Calu3 (cell line): ENCODE measurements at regions of chr14 and their contacts with region 1.

Region 1: DNA sequence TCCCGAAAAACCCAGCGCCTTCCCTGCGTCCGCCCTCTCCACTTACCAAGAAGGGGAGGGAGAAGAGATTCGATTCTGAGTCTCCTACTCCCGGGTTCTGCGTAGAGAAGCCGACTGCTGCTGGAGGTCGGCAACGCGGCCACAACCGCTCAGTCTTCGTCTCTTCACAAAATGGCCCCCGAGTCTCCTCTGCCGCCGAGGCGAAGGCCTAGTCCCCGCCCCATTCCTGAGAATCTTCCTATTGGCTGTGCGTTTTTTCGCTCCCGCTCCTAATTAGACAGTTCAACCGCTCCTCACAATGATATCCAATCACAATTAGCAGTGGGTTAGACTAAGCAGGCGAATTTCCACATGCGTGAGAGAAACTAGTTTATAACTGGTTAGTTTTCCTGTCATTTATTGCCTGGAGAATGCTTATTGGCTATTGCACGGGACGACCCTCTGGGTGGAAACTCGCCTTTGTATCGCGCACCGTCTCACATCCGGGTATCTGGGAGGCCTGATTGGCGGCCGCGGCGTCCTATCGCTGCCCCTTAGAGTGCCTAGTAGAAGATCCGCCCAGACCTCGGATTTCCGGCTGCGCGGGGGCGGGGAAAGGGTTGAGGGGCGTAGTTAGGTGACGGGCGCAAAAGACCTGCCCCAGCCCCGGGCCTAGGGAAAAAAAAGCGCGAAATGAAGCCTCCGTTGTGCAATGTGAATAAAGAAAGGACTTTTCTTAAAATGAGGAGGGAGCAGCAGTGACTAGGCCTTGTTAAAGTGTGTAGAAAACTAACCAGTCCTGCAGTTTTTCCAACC is at the start of gene HNRNPC:
- DNase-seq: peak; percentile 100
- H3K4me3 Mint-ChIP-seq: peak within 1 kb of the TSS; percentile 93
- H3K27ac Mint-ChIP-seq: peak within 1 kb of the TSS; percentile 99
- H3K4me1 Mint-ChIP-seq: no peaks in the 10 kb centered on the region
- H3K27me3 Mint-ChIP-seq: no peaks in the 10 kb centered on the region
- CTCF ChIP-seq: no peak
- total RNA-seq, gene HNRNPC: 472 and 476 TPM in 2 replicates

Region 2: GRCh38 chr14:21233457-21234076 is 35.9 kb before region 1 on chr14:
- CTCF ChIA-PET with region 1: no interaction called
- intact Hi-C with region 1: loop called (anchors 5 kb)
- DNase-seq: no peak
- H3K4me3 Mint-ChIP-seq: no peak overlapping the region
- H3K27ac Mint-ChIP-seq: no peak overlapping the region
- H3K4me1 Mint-ChIP-seq: peaks cover 59% of the 10 kb centered on the region
- H3K27me3 Mint-ChIP-seq: no peaks in the 10 kb centered on the region
- CTCF ChIP-seq: no peak

Region 3: GRCh38 chr14:21299562-21300130 is 30.2 kb after region 1 on chr14:
- CTCF ChIA-PET with region 1: interaction called, 12 read pairs
- intact Hi-C with region 1: no loop called
- DNase-seq: no peak
- H3K4me3 Mint-ChIP-seq: no peak overlapping the region
- H3K27ac Mint-ChIP-seq: no peak overlapping the region
- H3K4me1 Mint-ChIP-seq: no peaks in the 10 kb centered on the region
- H3K27me3 Mint-ChIP-seq: no peaks in the 10 kb centered on the region
- CTCF ChIP-seq: no peak

Region 4: GRCh38 chr14:21308479-21309237 is 39.2 kb after region 1 on chr14:
- CTCF ChIA-PET with region 1: no interaction called
- intact Hi-C with region 1: loop called (anchors 5 kb)
- DNase-seq: peak; percentile 88
- H3K4me3 Mint-ChIP-seq: peak overlapping the region; percentile 70
- H3K27ac Mint-ChIP-seq: peak overlapping the region; percentile 83
- H3K4me1 Mint-ChIP-seq: peaks cover 26% of the 10 kb centered on the region
- H3K27me3 Mint-ChIP-seq: no peaks in the 10 kb centered on the region
- CTCF ChIP-seq: no peak

Region 5: GRCh38 chr14:21383848-21384493 is 114.5 kb after region 1 on chr14 and contains the start of gene SUPT16H:
- CTCF ChIA-PET with region 1: no interaction called
- intact Hi-C with region 1: loop called (anchors 5 kb)
- DNase-seq: peak; percentile 93
- H3K4me3 Mint-ChIP-seq: peak within 1 kb of the TSS; percentile 89
- H3K27ac Mint-ChIP-seq: peak within 1 kb of the TSS; percentile 94
- H3K4me1 Mint-ChIP-seq: no peaks in the 10 kb centered on the region
- H3K27me3 Mint-ChIP-seq: no peaks in the 10 kb centered on the region
- CTCF ChIP-seq: no peak
- total RNA-seq, gene SUPT16H: 81.9 and 89.0 TPM in 2 replicates

Region 6: GRCh38 chr14:21617614-21618013 is 348.2 kb after region 1 on chr14:
- CTCF ChIA-PET with region 1: no interaction called
- intact Hi-C with region 1: no loop called
- DNase-seq: no peak
- H3K4me3 Mint-ChIP-seq: no peak overlapping the region
- H3K27ac Mint-ChIP-seq: no peak overlapping the region
- H3K4me1 Mint-ChIP-seq: no peaks in the 10 kb centered on the region
- H3K27me3 Mint-ChIP-seq: peaks cover 43% of the 10 kb centered on the region
- CTCF ChIP-seq: no peak